Activated T-helper 2 cell treated with anti-CD3 and anti-CD28 coated beads, Interferon-gamma antibody, Interleukin-2, Interleukin-4, amounts not matched to agents 10 μg/mL and 5 μg/mL and 100 μg/mL, durations not matched to agents 14 hours and 24 hours and 36 hours (primary cell): ENCODE measurements at regions of chr3 and their contacts with region 1.

Region 1: GRCh38 chr3:124639406-124640237 is 90.6 kb upstream of the UMPS start:
- DNase-seq: no peak
- H3K4me3 Mint-ChIP-seq: peak overlapping the region; percentile 16
- H3K27ac Mint-ChIP-seq: peak overlapping the region; percentile 68
- H3K4me1 Mint-ChIP-seq: peaks cover 38% of the 10 kb centered on the region
- H3K27me3 Mint-ChIP-seq: peaks cover 48% of the 10 kb centered on the region

Region 2: GRCh38 chr3:124520970-124521369 is 118.7 kb before region 1 on chr3:
- intact Hi-C with region 1: no loop called
- DNase-seq: no peak
- H3K4me3 Mint-ChIP-seq: no peak overlapping the region
- H3K27ac Mint-ChIP-seq: no peak overlapping the region
- H3K4me1 Mint-ChIP-seq: no peaks in the 10 kb centered on the region
- H3K27me3 Mint-ChIP-seq: peaks cover 4% of the 10 kb centered on the region

Region 3: DNA sequence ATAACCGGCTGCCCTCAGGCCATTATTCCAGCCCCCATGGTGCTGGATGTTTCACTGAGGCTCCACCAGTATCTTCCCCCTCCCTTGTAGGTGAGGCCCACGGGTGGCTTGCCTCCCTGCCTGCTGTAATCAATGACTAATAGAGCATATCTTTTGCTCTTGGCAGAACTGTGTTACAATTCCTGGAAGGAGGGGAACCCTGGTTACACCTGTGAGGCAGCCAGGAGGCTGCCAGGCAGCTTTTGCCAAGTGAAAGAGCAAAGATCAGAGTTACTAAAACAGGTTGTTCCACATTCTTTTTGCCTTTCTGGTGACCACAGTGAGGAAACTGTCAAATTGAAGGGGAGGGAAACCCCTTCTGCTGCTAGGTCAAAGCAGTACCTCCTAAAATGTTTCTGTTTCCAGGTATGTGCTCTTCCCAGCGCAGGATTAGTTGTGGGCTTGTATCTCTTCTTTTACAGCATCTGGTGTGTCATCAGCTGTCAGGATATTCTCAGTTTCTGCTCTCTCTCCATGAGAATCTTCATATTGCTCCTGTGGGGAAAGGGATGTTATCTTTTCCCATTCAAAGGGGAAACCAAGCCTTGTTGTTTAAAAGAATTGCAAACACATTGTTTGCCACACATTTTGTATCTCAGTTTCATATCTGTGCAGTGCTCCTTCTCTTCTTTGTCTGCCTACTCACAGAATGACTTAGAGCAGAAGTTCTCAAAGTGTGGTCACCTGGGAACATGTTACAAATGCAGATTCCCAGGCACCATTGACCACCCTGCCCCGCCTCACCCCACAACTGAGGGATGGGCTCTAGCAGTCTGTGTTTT is 46.8 kb before region 1 on chr3:
- intact Hi-C with region 1: loop called (anchors 5 kb)
- DNase-seq: no peak
- H3K4me3 Mint-ChIP-seq: no peak overlapping the region
- H3K27ac Mint-ChIP-seq: peak overlapping the region; percentile 16
- H3K4me1 Mint-ChIP-seq: peaks cover 14% of the 10 kb centered on the region
- H3K27me3 Mint-ChIP-seq: peaks cover 20% of the 10 kb centered on the region

Region 4: DNA sequence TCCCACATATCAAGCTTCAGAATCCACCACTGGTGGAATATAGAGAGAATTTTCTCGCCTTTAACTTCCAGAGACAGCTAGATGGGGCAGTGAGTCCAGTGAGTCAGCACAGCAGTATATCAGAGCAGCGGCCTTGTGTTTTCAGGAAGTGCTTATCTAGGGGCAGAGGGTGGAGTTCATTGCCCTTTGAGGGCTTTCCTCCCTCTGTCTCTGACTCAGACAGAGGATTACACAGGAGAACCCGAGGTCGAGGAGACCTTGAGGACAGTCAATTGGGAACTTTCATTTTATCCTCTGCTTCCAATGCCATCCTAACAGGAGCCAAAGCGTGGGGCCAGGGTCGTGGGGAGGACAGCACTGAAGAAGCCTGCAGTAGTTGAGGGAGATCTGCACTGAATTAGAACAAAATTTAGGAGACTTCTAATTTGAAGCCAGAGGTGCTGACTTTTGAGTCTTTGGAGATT is 19.0 kb before region 1 on chr3:
- intact Hi-C with region 1: loop called (anchors 1 kb)
- DNase-seq: no peak
- H3K4me3 Mint-ChIP-seq: no peak overlapping the region
- H3K27ac Mint-ChIP-seq: peak overlapping the region; percentile 64
- H3K4me1 Mint-ChIP-seq: peaks cover 25% of the 10 kb centered on the region
- H3K27me3 Mint-ChIP-seq: peaks cover 11% of the 10 kb centered on the region

Region 5: DNA sequence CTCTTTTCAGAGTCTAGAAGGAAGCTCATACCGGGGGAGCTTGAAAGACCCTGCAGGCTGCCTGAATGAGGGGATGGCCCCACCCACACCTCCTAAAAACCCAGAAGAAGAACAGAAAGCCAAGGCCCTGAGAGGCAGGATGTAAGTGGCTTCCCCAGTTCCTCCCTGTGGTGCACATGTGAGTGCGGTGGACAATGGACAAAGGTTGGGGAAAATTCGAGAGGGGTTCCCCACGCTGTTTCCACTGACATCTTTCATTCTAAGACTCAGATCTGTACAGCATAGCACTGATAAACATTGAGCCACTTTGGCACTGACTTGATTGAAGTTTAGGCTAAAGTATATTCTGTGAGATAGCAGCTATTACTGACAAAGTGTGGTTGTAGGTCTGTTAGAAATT is 11.2 kb after region 1 on chr3:
- intact Hi-C with region 1: loop called (anchors 1 kb)
- DNase-seq: no peak
- H3K4me3 Mint-ChIP-seq: no peak overlapping the region
- H3K27ac Mint-ChIP-seq: peak overlapping the region; percentile 67
- H3K4me1 Mint-ChIP-seq: peaks cover 20% of the 10 kb centered on the region
- H3K27me3 Mint-ChIP-seq: peaks cover 35% of the 10 kb centered on the region